ENCODE measurements at regions of chr3 and their contacts with region 1.

Region 1: GRCh38 chr3:90091204-90091924 is 983.9 kb downstream of the EPHA3 start:
- DNase-seq: no peak
- ATAC-seq: peak; percentile 94
- H3K4me3 ChIP-seq: no peak overlapping the region
- H3K27ac ChIP-seq: no peak overlapping the region
- H3K4me1 ChIP-seq: no peaks in the 10 kb centered on the region
- H3K27me3 ChIP-seq: no peaks in the 10 kb centered on the region
- CTCF ChIP-seq: peak; percentile 22 to 49 (median 42); a peak in 4 of 6 replicates
- EP300 ChIP-seq: no peak
- POLR2A ChIP-seq: no peak
- RAD21 ChIP-seq: peak; percentile 60

Region 2: GRCh38 chr3:88203642-88204055 is 1887.7 kb before region 1 on chr3:
- CTCF ChIA-PET with region 1: interaction called, 10 read pairs
- POLR2A ChIA-PET with region 1: no interaction called
- RAD21 ChIA-PET with region 1: interaction called, 3 read pairs
- SMC1A ChIA-PET with region 1: interaction called, 3 read pairs
- in situ Hi-C with region 1: loop called (anchors 25 kb)
- intact Hi-C with region 1: loop called (anchors 2 kb)
- DNase-seq: peak; percentile 24
- ATAC-seq: peak; percentile 98
- H3K4me3 ChIP-seq: no peak overlapping the region
- H3K27ac ChIP-seq: no peak overlapping the region
- H3K4me1 ChIP-seq: no peaks in the 10 kb centered on the region
- H3K27me3 ChIP-seq: no peaks in the 10 kb centered on the region
- CTCF ChIP-seq: peak; percentile 84 to 85 (median 84)
- EP300 ChIP-seq: no peak
- POLR2A ChIP-seq: no peak
- RAD21 ChIP-seq: peak; percentile 90

Region 3: GRCh38 chr3:89314454-89315098 is 776.8 kb before region 1 on chr3:
- CTCF ChIA-PET with region 1: interaction called, 13 read pairs
- POLR2A ChIA-PET with region 1: no interaction called
- RAD21 ChIA-PET with region 1: interaction called, 13 read pairs
- SMC1A ChIA-PET with region 1: interaction called, 19 read pairs
- in situ Hi-C with region 1: no loop called
- intact Hi-C with region 1: no loop called
- DNase-seq: no peak
- ATAC-seq: peak; percentile 70
- H3K4me3 ChIP-seq: no peak overlapping the region
- H3K27ac ChIP-seq: no peak overlapping the region
- H3K4me1 ChIP-seq: no peaks in the 10 kb centered on the region
- H3K27me3 ChIP-seq: no peaks in the 10 kb centered on the region
- CTCF ChIP-seq: no peak; a peak in 1 of 6 replicates
- EP300 ChIP-seq: no peak
- POLR2A ChIP-seq: no peak
- RAD21 ChIP-seq: no peak

Region 4: DNA sequence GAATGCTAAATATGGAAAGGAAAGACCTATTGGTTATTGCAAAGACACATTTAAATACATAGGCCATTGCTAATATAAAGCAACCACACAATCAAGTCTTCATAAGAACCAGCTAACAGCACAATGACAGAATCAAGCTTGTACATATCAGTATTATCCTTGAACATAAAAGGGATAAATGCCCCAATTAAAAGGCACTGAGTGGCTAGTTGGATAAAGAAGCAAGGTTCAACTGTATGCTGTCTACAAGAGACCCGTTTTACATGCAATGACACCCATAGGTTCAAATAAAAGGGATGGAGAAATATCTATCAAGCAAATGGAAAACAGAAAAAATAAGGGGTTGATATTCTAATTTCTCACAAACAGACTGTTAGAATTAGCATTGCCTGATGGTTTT is 277.9 kb before region 1 on chr3:
- CTCF ChIA-PET with region 1: interaction called, 13 read pairs
- POLR2A ChIA-PET with region 1: no interaction called
- RAD21 ChIA-PET with region 1: interaction called, 11 read pairs
- SMC1A ChIA-PET with region 1: interaction called, 3 read pairs
- in situ Hi-C with region 1: no loop called
- intact Hi-C with region 1: no loop called
- DNase-seq: no peak
- ATAC-seq: no peak
- H3K4me3 ChIP-seq: no peak overlapping the region
- H3K27ac ChIP-seq: no peak overlapping the region
- H3K4me1 ChIP-seq: no peaks in the 10 kb centered on the region
- H3K27me3 ChIP-seq: no peaks in the 10 kb centered on the region
- CTCF ChIP-seq: no peak
- EP300 ChIP-seq: no peak
- POLR2A ChIP-seq: no peak
- RAD21 ChIP-seq: no peak

Region 5: GRCh38 chr3:90015688-90016356 is 75.5 kb before region 1 on chr3:
- CTCF ChIA-PET with region 1: interaction called, 8 read pairs
- POLR2A ChIA-PET with region 1: interaction called, 3 read pairs
- RAD21 ChIA-PET with region 1: interaction called, 16 read pairs
- SMC1A ChIA-PET with region 1: interaction called, 28 read pairs
- in situ Hi-C with region 1: no loop called
- intact Hi-C with region 1: no loop called
- DNase-seq: no peak
- ATAC-seq: peak; percentile 71
- H3K4me3 ChIP-seq: no peak overlapping the region
- H3K27ac ChIP-seq: no peak overlapping the region
- H3K4me1 ChIP-seq: no peaks in the 10 kb centered on the region
- H3K27me3 ChIP-seq: no peaks in the 10 kb centered on the region
- CTCF ChIP-seq: no peak
- EP300 ChIP-seq: no peak
- POLR2A ChIP-seq: no peak
- RAD21 ChIP-seq: no peak

Region 6: GRCh38 chr3:90062016-90062415 is 29.3 kb before region 1 on chr3:
- CTCF ChIA-PET with region 1: interaction called, 31 read pairs
- POLR2A ChIA-PET with region 1: interaction called, 3 read pairs
- RAD21 ChIA-PET with region 1: interaction called, 31 read pairs
- SMC1A ChIA-PET with region 1: interaction called, 105 read pairs
- in situ Hi-C with region 1: no loop called
- intact Hi-C with region 1: no loop called
- DNase-seq: no peak
- ATAC-seq: no peak
- H3K4me3 ChIP-seq: no peak overlapping the region
- H3K27ac ChIP-seq: no peak overlapping the region
- H3K4me1 ChIP-seq: no peaks in the 10 kb centered on the region
- H3K27me3 ChIP-seq: no peaks in the 10 kb centered on the region
- CTCF ChIP-seq: no peak
- EP300 ChIP-seq: no peak
- POLR2A ChIP-seq: no peak
- RAD21 ChIP-seq: no peak

Region 7: DNA sequence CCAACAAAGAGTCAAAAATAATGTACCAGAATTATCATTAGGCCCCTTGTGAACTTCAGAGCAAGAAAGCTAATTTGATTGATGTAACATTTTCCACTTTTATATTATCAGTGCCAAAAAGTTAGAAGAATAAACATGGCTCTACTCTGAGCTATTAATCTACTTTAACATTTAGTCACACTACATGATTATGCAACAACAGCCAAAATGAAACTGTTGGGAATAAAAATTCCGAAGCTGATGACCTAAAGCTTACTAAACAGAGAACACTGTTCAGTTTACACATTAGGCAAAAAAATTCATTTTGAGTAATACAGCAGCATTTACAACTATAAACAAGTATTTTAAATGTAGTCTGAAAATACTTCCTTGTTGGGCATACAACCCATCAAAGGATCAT is 150.1 kb after region 1 on chr3:
- CTCF ChIA-PET with region 1: no interaction called
- POLR2A ChIA-PET with region 1: no interaction called
- RAD21 ChIA-PET with region 1: no interaction called
- SMC1A ChIA-PET with region 1: no interaction called
- in situ Hi-C with region 1: no loop called
- intact Hi-C with region 1: no loop called
- DNase-seq: no peak
- ATAC-seq: no peak
- H3K4me3 ChIP-seq: no peak overlapping the region
- H3K27ac ChIP-seq: no peak overlapping the region
- H3K4me1 ChIP-seq: no peaks in the 10 kb centered on the region
- H3K27me3 ChIP-seq: no peaks in the 10 kb centered on the region
- CTCF ChIP-seq: no peak
- EP300 ChIP-seq: no peak
- POLR2A ChIP-seq: no peak
- RAD21 ChIP-seq: no peak